Right lobe of liver (tissue), 6 donors: ENCODE measurements at regions of chr10 and their contacts with region 1.

Region 1: DNA sequence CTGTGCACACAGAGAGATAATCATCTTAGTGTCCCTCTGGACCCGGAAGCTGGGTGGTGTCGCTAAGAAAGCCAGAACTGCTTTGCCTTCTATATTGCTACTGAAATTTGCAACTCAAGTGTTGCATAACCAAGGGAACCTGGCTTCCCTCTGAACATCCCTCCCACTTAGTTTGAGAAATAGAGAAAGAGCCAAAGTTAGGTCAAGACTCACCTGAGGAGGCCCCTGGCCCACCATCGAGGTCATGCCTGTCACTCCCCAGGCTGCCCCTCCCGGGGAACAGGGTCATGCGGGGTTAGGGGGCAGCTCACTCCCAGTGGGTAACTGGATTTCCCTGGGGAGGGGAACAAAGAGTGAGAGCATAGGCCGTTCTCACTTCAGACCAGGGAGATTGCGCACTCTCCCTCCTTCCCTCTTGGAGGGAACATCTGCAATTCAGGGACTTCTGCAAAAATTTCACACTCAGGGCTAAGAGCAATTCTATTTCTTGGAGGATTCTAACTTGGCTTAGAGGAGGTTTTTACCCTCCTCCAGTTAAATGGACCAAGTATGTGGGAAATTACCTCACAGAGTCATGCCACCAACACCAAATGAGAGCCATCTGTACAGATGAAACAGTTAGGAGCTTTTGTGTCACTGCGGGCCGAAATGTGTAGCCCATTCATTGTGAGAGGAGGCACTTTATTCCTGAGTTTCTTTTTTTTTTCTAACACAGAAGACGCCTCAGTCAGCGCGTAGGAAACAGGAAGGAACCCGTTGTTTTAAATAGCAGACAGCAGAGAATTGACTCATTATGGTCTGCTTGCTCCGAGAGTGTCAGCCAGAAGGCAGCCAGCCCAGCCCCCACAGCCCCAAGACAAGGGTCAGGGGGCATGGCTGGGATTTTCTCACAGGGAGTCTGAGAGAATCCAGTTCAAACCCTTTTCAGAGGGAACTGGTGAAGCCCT is 221.3 kb downstream of the ARHGAP12 start:
- DNase-seq: peak; percentile 63 to 75 (median 67)
- ATAC-seq: peak; percentile 73 to 84 (median 82)
- H3K4me3 ChIP-seq: no peak overlapping the region
- H3K27ac ChIP-seq: peak overlapping the region; percentile 29 to 70 (median 63)
- H3K4me1 ChIP-seq: peaks cover 0 to 4% (median 0%) of the 10 kb centered on the region in 4 donors
- H3K27me3 ChIP-seq: no peaks in the 10 kb centered on the region
- CTCF ChIP-seq: no peak
- POLR2A ChIP-seq: no peak

Region 2: GRCh38 chr10:31770307-31770902 is 63.0 kb after region 1 on chr10:
- intact Hi-C with region 1: loop called in 1 of 2 experiments (anchors 5 kb)
- DNase-seq: peak; percentile 61 to 68 (median 62)
- ATAC-seq: peak; percentile 91 to 96 (median 94)
- H3K4me3 ChIP-seq: no peak overlapping the region
- H3K27ac ChIP-seq: no peak overlapping the region
- H3K4me1 ChIP-seq: no peaks in the 10 kb centered on the region
- H3K27me3 ChIP-seq: no peaks in the 10 kb centered on the region
- CTCF ChIP-seq: peak; percentile 85 to 93 (median 90)
- POLR2A ChIP-seq: no peak